Heart right ventricle (tissue), 16 donors: ENCODE measurements at regions of chr9 and their contacts with region 1.

Region 1: GRCh38 chr9:105076729-105077128 is 148.8 kb upstream of the ABCA1 start:
- DNase-seq: no peak
- ATAC-seq: no peak
- H3K4me3 ChIP-seq: no peak overlapping the region
- H3K27ac ChIP-seq: no peak overlapping the region
- H3K4me1 ChIP-seq: no peaks in the 10 kb centered on the region
- H3K27me3 ChIP-seq: no peaks in the 10 kb centered on the region
- CTCF ChIP-seq: no peak

Region 2: GRCh38 chr9:105026451-105026850 is 50.3 kb before region 1 on chr9:
- intact Hi-C with region 1: no loop called
- DNase-seq: no peak
- ATAC-seq: no peak
- H3K4me3 ChIP-seq: no peak overlapping the region
- H3K27ac ChIP-seq: peak overlapping the region in 1 of 10 donors; percentile 32
- H3K4me1 ChIP-seq: peaks cover 0 to 5% (median 0%) of the 10 kb centered on the region in 9 donors
- H3K27me3 ChIP-seq: no peaks in the 10 kb centered on the region
- CTCF ChIP-seq: no peak

Region 3: GRCh38 chr9:105150991-105151685 is 74.4 kb after region 1 on chr9:
- intact Hi-C with region 1: loop called in 1 of 10 experiments (anchors 5 kb)
- DNase-seq: no peak
- ATAC-seq: no peak
- H3K4me3 ChIP-seq: no peak overlapping the region
- H3K27ac ChIP-seq: no peak overlapping the region
- H3K4me1 ChIP-seq: peaks cover 0 to 17% (median 0%) of the 10 kb centered on the region in 9 donors
- H3K27me3 ChIP-seq: no peaks in the 10 kb centered on the region
- CTCF ChIP-seq: no peak